Natural killer cell (primary cell): ENCODE measurements at regions of chr9 and their contacts with region 1.

Region 1: DNA sequence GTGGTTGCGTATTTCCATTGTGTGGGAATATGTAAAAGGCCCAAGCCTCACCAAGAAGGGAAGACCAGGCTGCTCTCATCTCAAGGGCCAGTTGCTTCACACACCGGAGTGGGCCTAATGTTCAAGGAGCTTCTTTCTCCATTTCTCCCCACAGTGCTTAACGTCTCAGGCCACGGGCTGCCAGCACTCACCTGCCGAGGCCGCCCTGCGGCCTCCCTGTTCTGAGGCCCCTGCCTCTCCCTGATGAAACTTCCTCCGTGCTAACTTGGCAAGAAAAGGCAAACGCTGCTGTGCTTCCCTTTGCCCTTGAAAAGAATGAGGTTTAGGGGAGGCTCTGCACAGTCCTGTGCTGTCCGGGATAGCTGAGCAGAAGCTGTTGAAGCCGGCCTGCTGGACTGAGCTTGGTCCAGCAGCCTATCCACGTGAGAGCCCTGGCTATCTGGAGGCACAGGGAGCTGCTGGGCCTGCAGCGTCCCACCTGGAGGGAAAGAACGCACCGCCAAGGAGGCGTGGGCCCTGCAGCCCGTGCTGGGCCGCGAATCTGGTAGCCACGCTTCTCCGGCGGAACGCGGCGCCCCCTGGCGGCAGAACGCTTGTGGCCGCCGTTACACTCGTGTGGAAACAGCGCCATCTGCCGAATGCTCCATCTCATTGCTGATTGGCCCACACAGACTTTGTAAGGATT is 73.5 kb upstream of the PRSS3 start:
- DNase-seq: peak; percentile 89 to 94
- ATAC-seq: peak; percentile 90 to 92 (median 91)
- H3K4me3 ChIP-seq: no peak overlapping the region
- H3K4me3 Mint-ChIP-seq: no peak overlapping the region
- H3K27ac ChIP-seq: no peak overlapping the region
- H3K27ac Mint-ChIP-seq: no peak overlapping the region
- H3K4me1 ChIP-seq: peaks cover 10% of the 10 kb centered on the region
- H3K4me1 Mint-ChIP-seq: peaks cover 5 to 11% of the 10 kb centered on the region in 2 donors
- H3K27me3 ChIP-seq: no peaks in the 10 kb centered on the region
- H3K27me3 Mint-ChIP-seq: peaks cover 7% of the 10 kb centered on the region in 2 donors
- CTCF ChIP-seq: peak; percentile 100

Region 2: DNA sequence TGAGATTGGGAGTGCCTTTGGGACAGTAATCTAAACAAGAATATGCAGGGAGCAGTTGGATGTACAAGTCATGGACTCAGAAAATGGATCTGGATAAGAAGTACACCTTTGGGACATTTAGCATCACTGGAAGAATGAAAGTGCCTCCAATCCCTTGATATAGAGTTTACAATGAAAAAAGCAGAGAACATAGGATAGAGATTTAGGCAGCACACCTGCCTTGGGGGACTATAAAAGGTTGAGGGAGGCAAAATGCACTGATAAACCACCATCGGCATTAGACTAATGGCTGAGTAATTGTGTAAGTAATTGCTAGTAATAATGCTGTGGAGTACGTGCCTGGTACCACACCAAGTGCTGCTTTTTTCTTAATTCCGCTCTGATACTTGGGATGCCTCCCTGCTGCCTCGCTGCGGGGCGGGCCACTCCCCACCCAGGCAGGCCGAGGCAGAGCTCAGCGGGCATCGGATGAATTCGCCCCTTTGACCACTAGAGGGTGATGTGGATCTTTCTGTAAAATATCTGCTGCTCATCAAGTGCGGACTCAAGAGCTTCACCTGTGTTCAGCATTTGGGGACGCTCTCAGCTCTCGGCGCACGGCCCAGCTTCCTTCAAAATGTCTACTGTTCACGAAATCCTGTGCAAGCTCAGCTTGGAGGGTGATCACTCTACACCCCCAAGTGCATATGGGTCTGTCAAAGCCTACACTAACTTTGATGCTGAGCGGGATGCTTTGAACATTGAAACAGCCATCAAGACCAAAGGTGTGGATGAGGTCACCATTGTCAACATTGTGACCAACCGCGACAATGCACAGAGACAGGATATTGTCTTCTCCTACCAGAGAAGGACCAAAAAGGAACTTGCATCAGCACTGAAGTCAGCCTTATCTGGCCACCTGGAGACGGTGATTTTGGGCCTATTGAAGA is 97.9 kb before region 1 on chr9:
- intact Hi-C with region 1: loop called (anchors 1 kb)
- DNase-seq: peak; percentile 55 to 87
- ATAC-seq: peak; percentile 87 to 99 (median 93)
- H3K4me3 ChIP-seq: no peak overlapping the region
- H3K4me3 Mint-ChIP-seq: no peak overlapping the region
- H3K27ac ChIP-seq: no peak overlapping the region
- H3K27ac Mint-ChIP-seq: no peak overlapping the region
- H3K4me1 ChIP-seq: peaks cover 5% of the 10 kb centered on the region
- H3K4me1 Mint-ChIP-seq: peaks cover 5 to 7% of the 10 kb centered on the region in 2 donors
- H3K27me3 ChIP-seq: peaks cover 4% of the 10 kb centered on the region
- H3K27me3 Mint-ChIP-seq: peaks cover 10 to 48% of the 10 kb centered on the region in 2 donors
- CTCF ChIP-seq: peak; percentile 83